Dendritic cell treated with granulocyte-macrophage colony-stimulating factor and Interleukin-4, amounts not matched to agents 40 ng/mL and 50 ng/mL, for 4 days (primary cell): ENCODE measurements at regions of chr6 and their contacts with region 1.

Region 1: DNA sequence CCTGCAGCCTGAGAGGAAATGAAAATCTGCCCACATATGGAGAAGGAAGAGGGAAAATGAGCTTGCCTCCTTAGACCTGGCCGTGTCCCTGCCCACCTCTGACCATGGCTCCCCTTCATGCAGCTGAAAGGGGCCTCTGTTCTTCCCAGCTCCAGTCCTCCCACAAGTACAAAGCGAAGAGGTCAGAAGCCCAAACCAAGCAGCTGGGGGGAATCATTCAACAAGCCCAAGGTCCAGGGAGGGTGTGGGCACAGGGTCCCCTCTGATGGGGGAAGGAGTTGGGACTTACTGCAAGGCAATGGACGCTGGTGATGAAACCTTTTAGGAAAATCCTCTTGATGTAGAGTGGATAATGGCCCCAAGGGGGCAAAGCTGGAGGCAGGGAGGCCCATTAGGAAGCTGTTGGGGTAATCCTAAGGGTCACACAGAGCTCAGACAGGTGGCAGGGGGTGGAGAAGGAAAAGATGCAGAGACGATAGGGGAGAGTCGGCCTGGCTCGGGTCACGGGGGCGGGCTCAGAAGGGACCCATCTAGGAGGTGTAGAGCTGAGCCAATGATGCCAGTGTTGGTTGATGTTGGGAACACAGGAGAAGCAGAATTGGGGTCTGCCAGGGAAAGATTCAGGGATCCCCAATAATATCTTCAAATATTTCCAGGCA is 16.1 kb upstream of the GRM4 start:
- H3K4me3 Mint-ChIP-seq: no peak overlapping the region
- H3K27ac Mint-ChIP-seq: no peak overlapping the region
- H3K4me1 Mint-ChIP-seq: peaks cover 47% of the 10 kb centered on the region
- H3K27me3 Mint-ChIP-seq: peaks cover 35% of the 10 kb centered on the region

Region 2: DNA sequence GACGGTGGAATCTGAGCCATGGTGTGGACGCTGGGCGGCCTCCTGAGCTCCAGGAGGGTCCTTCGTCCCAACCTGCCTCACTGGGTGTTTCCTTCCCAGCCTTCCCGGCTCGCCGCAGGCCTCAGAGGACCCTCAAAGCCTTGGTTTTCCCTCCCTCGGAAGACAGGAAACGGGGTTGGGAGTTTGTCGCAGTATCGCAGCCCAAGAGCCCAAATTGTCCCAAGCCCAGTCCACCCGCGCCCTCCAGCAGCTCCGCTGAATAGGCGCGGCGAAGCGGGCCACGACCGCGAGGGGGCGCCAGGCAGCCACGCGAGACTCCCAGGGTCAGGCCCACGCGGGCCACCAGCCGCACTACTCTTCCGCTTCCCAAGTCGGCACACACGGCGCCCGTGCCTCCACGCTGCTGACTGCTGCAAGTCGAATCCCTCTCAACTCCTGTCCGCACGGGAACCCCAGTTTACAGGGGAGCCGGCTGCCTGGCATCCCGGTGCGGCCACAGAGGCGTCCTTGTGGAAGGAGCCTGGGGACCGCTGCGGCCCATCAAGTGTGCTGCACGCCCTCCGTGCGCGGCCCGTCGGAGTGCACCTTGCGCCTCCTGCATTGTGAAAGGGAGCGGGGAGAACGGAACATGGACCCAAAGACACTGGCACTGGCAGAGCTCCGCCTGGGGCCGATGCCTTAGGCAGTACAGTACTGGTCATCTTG is 34.3 kb after region 1 on chr6:
- intact Hi-C with region 1: loop called (anchors 5 kb)
- H3K4me3 Mint-ChIP-seq: peak overlapping the region; percentile 88
- H3K27ac Mint-ChIP-seq: peak overlapping the region; percentile 42
- H3K4me1 Mint-ChIP-seq: peaks cover 12% of the 10 kb centered on the region
- H3K27me3 Mint-ChIP-seq: peaks cover 33% of the 10 kb centered on the region

Region 3: GRCh38 chr6:34223956-34224940 is 62.3 kb after region 1 on chr6:
- intact Hi-C with region 1: no loop called
- H3K4me3 Mint-ChIP-seq: peak overlapping the region; percentile 56
- H3K27ac Mint-ChIP-seq: peak overlapping the region; percentile 67
- H3K4me1 Mint-ChIP-seq: peaks cover 47% of the 10 kb centered on the region
- H3K27me3 Mint-ChIP-seq: no peaks in the 10 kb centered on the region

Region 4: GRCh38 chr6:34276881-34277762 is 115.1 kb after region 1 on chr6:
- intact Hi-C with region 1: no loop called
- H3K4me3 Mint-ChIP-seq: no peak overlapping the region
- H3K27ac Mint-ChIP-seq: no peak overlapping the region
- H3K4me1 Mint-ChIP-seq: peaks cover 73% of the 10 kb centered on the region
- H3K27me3 Mint-ChIP-seq: no peaks in the 10 kb centered on the region

Region 5: DNA sequence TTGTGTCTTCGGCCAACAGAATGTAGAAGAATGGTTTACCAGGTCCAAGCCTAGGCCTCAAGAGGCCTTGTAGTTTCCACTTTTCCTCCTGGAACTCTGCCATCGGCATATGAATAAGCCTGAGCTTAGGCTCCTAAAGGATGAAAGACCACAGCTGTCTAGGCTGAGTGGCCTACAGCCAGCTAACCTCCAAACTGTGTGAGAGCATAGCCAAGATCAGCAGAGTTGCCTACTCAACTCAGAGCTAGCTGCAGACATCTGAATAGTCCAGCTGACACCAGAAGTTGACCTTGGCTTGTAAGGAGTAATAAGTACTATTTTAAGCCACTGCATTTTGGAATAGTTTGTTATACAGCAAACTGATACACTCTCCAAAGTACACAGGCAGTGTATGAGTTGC is 139.4 kb after region 1 on chr6:
- intact Hi-C with region 1: no loop called
- H3K4me3 Mint-ChIP-seq: no peak overlapping the region
- H3K27ac Mint-ChIP-seq: peak overlapping the region; percentile 55
- H3K4me1 Mint-ChIP-seq: peaks cover 45% of the 10 kb centered on the region
- H3K27me3 Mint-ChIP-seq: no peaks in the 10 kb centered on the region

Region 6: GRCh38 chr6:34414999-34415858 is 253.2 kb after region 1 on chr6:
- intact Hi-C with region 1: loop called (anchors 5 kb)
- H3K4me3 Mint-ChIP-seq: no peak overlapping the region
- H3K27ac Mint-ChIP-seq: peak overlapping the region; percentile 50
- H3K4me1 Mint-ChIP-seq: peaks cover 17% of the 10 kb centered on the region
- H3K27me3 Mint-ChIP-seq: no peaks in the 10 kb centered on the region